ENCODE measurements at regions of chr2 and their contacts with region 1.

Region 1: GRCh38 chr2:232521959-232522622 is 1.9 kb downstream of the PRSS56 start:
- DNase-seq: peak; percentile 38 to 85 (median 80)
- ATAC-seq: peak; percentile 81
- H3K4me3 ChIP-seq: no peak overlapping the region
- H3K27ac ChIP-seq: no peak overlapping the region
- H3K4me1 ChIP-seq: peaks cover 0 to 27% of the 10 kb centered on the region in 2 experiments; a peak in 2 of 5 replicates
- H3K27me3 ChIP-seq: peaks cover 0 to 50% of the 10 kb centered on the region in 2 experiments; a peak in 3 of 5 replicates
- CTCF ChIP-seq: peak; percentile 39 to 72 (median 66); a peak in 5 of 6 replicates
- EP300 ChIP-seq: no peak
- POLR2A ChIP-seq: no peak
- RAD21 ChIP-seq: peak; percentile 54 to 75

Region 2: GRCh38 chr2:232236200-232236599 is 285.9 kb before region 1 on chr2:
- CTCF ChIA-PET with region 1: no interaction called
- POLR2A ChIA-PET with region 1: no interaction called
- in situ Hi-C with region 1: no loop called
- intact Hi-C with region 1: loop called (anchors 5 kb)
- DNase-seq: no peak
- ATAC-seq: no peak
- H3K4me3 ChIP-seq: no peak overlapping the region
- H3K27ac ChIP-seq: no peak overlapping the region
- H3K4me1 ChIP-seq: no peaks in the 10 kb centered on the region
- H3K27me3 ChIP-seq: no peaks in the 10 kb centered on the region
- CTCF ChIP-seq: no peak
- EP300 ChIP-seq: no peak
- POLR2A ChIP-seq: no peak
- RAD21 ChIP-seq: no peak

Region 3: DNA sequence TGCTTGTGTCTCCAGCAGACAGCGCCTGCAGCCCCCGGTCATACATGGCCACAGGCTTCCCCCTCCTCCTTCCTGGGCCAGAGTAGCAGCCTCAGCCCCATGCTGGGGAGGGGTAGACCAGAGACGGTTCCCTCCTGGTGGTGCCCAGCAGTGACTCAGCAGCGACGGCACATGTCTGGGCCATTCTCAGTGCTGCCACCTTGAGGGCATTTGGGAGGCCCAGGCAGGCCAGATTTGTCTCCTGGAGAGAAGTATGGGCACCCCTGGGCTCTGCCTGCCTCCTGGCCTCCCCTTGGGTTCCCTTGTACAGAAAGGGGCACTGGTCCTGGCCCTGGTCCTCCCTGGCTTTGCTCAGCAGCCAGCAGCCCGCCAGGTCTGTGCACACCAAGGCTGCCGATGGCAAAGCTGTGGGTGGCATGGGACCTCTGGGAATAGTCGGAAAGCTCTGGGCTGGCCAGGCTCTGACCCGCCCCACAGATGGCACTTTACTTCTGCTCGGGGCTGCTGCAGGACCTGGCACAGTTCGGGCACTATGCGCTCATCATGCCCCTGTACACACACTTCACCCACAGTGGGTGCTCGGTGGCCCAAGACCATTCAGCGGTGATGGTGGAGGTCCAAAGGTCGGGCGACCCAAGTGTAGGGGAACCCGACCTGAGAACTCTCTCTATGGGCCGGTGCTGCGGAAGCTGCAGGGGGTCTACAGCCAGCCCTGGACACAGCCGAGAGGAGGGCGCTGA is 77.5 kb before region 1 on chr2:
- CTCF ChIA-PET with region 1: interaction called, 4 read pairs
- POLR2A ChIA-PET with region 1: no interaction called
- in situ Hi-C with region 1: no loop called
- intact Hi-C with region 1: loop called (anchors 5 kb)
- DNase-seq: peak; percentile 52 to 65 (median 60)
- ATAC-seq: peak; percentile 64
- H3K4me3 ChIP-seq: no peak overlapping the region
- H3K27ac ChIP-seq: no peak overlapping the region
- H3K4me1 ChIP-seq: peaks cover 0 to 12% of the 10 kb centered on the region in 2 experiments; a peak in 2 of 5 replicates
- H3K27me3 ChIP-seq: no peaks in the 10 kb centered on the region
- CTCF ChIP-seq: peak; percentile 54 to 60 (median 59)
- EP300 ChIP-seq: no peak
- POLR2A ChIP-seq: no peak
- RAD21 ChIP-seq: no peak

Measured in K562 (cell line).